Transverse colon (tissue), 4 donors: ENCODE measurements at regions of chr19 and their contacts with region 1.

Region 1: GRCh38 chr19:38095411-38096308 is 128.4 kb downstream of the DPF1 start:
- DNase-seq: peak; percentile 66
- H3K4me3 ChIP-seq: no peak overlapping the region
- H3K27ac ChIP-seq: no peak overlapping the region
- H3K4me1 ChIP-seq: no peaks in the 10 kb centered on the region
- H3K27me3 ChIP-seq: no peaks in the 10 kb centered on the region
- CTCF ChIP-seq: peak; percentile 44 to 56 (median 52)
- EP300 ChIP-seq: no peak
- POLR2A ChIP-seq: no peak

Region 2: GRCh38 chr19:37906869-37907734 is 188.6 kb before region 1 on chr19 and contains the start of gene SIPA1L3:
- in situ Hi-C with region 1: loop called in 2 of 4 experiments (anchors 10 to 25 kb)
- intact Hi-C with region 1: no loop called
- DNase-seq: peak; percentile 97
- H3K4me3 ChIP-seq: peak within 1 kb of the TSS; percentile 88 to 98 (median 96)
- H3K27ac ChIP-seq: peak within 1 kb of the TSS; percentile 78 to 87 (median 85)
- H3K4me1 ChIP-seq: peaks cover 4 to 18% (median 13%) of the 10 kb centered on the region in 4 donors
- H3K27me3 ChIP-seq: no peaks in the 10 kb centered on the region
- CTCF ChIP-seq: peak in 1 of 5 experiments; percentile 1
- EP300 ChIP-seq: no peak
- POLR2A ChIP-seq: peak; percentile 49
- total RNA-seq, gene SIPA1L3: 191 to 284 (median 231) TPM

Region 3: DNA sequence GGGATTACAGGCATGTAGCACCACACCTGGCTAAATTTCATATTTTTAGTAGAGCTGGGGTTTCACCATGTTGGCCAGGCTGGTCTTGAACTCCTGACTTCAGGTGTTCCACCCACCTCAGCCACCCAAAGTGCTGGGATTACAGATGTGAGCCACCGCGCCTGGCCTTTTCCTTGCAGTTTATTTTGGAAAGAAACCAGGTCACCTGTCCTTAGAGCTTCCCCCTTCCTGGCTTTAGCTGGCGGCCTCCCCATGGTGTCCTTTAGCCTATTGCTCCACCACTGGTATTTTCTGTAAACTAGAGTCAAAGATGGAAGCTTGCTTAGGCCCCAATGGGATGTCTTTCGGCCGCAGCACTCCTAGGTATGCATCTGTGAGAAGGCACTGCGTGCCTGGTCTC is 37.1 kb after region 1 on chr19:
- in situ Hi-C with region 1: no loop called
- intact Hi-C with region 1: loop called (anchors 1 kb)
- DNase-seq: no peak
- H3K4me3 ChIP-seq: no peak overlapping the region
- H3K27ac ChIP-seq: no peak overlapping the region
- H3K4me1 ChIP-seq: no peaks in the 10 kb centered on the region
- H3K27me3 ChIP-seq: no peaks in the 10 kb centered on the region
- CTCF ChIP-seq: no peak
- EP300 ChIP-seq: no peak
- POLR2A ChIP-seq: no peak